ENCODE measurements at regions of chr16 and their contacts with region 1.

Region 1: GRCh38 chr16:87062569-87063442 is 254.4 kb downstream of the C16orf95 start:
- DNase-seq: peak; percentile 82
- ATAC-seq: peak; percentile 81
- H3K4me3 Mint-ChIP-seq: peak overlapping the region; percentile 20
- H3K27ac Mint-ChIP-seq: no peak overlapping the region
- H3K4me1 Mint-ChIP-seq: peaks cover 31% of the 10 kb centered on the region
- H3K27me3 Mint-ChIP-seq: no peaks in the 10 kb centered on the region
- CTCF ChIP-seq: peak; percentile 76

Region 2: GRCh38 chr16:86563489-86564345 is 499.1 kb before region 1 on chr16:
- CTCF ChIA-PET with region 1: interaction called, 10 read pairs
- POLR2A ChIA-PET with region 1: no interaction called
- DNase-seq: peak; percentile 93
- ATAC-seq: peak; percentile 27
- H3K4me3 Mint-ChIP-seq: peak overlapping the region; percentile 62
- H3K27ac Mint-ChIP-seq: no peak overlapping the region
- H3K4me1 Mint-ChIP-seq: peaks cover 20% of the 10 kb centered on the region
- H3K27me3 Mint-ChIP-seq: peaks cover 66% of the 10 kb centered on the region
- CTCF ChIP-seq: peak; percentile 98

Region 3: DNA sequence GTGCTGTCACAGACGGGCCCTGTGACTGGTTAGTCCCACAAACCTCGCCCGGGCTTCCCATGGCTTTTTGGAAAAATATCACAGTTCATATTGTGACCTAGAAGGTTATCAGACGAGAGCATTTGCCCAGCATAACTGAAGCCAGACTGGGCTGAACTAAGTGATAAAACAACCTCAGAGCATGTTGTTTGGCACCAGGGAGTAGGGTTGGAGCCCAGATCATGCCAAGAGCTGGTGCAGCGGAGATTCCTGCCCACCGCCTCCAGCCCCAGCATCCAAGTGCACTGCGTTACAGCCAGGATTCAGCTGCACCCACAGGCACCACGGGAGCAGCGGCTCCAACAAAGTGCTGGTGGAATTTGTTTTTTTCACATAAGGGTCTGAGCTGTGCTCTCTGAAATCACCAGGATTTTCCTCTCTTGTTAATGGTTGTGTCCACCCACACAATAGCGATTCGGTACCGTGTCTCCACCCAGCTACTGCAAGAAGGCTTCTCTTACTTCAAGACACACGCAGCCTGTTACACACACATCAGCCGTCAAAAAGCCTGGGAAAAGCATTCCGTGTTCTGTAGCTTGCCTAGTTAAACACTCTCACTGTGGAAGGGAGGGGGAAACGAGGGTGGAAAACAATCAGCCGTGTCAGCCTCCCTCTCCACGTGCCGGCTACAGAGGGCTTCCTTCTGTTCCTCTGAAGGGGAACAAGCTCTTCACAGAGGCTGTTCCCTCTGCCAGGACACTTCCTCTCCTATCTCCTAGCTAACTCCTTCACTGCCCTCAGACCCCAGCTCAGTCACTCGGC is 19.4 kb before region 1 on chr16:
- CTCF ChIA-PET with region 1: interaction called, 18 read pairs
- POLR2A ChIA-PET with region 1: no interaction called
- DNase-seq: no peak
- ATAC-seq: no peak
- H3K4me3 Mint-ChIP-seq: no peak overlapping the region
- H3K27ac Mint-ChIP-seq: peak overlapping the region; percentile 44
- H3K4me1 Mint-ChIP-seq: peaks cover 23% of the 10 kb centered on the region
- H3K27me3 Mint-ChIP-seq: no peaks in the 10 kb centered on the region
- CTCF ChIP-seq: no peak

Region 4: DNA sequence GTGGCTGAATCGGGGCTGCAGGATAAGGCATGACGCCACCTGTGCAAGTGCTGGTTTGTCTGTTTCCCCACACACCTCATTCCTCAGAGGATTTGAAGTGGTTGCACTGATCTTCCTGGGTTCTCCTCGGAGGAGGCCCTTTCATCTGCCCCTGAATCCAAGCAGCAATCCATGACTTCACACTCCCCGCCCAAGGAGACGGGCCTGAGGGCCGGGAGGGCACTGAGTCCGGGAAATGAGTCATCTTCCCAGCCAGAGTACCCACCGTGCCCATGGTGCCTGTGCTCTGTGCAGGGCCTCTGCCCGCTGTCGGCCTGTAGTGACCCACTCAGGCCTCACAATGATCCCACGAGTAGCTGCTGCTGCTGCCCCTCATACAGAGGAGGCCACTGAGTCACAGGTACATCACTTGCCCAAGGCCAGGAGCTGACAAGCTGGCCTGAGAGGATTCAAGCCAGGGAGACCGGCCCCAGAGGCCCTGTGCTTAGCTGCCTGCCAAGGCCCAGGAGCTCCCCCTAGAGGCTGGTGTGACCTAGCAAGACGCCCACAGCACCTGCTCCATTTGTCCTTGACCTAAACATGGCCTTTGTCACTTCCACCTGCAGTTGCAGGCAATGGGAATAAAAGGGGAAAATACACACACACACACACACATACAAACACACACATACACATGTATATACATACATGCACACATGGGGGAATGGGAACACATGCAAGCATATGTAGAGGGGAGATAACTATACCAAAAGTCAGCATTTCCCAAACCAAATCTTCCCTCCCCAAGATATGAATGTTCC is 14.3 kb after region 1 on chr16:
- CTCF ChIA-PET with region 1: interaction called, 25 read pairs
- POLR2A ChIA-PET with region 1: no interaction called
- DNase-seq: peak; percentile 90
- ATAC-seq: peak; percentile 96
- H3K4me3 Mint-ChIP-seq: no peak overlapping the region
- H3K27ac Mint-ChIP-seq: no peak overlapping the region
- H3K4me1 Mint-ChIP-seq: no peaks in the 10 kb centered on the region
- H3K27me3 Mint-ChIP-seq: peaks cover 4% of the 10 kb centered on the region
- CTCF ChIP-seq: peak; percentile 69

Region 5: GRCh38 chr16:87311387-87311786 is 248.6 kb after region 1 on chr16:
- CTCF ChIA-PET with region 1: no interaction called
- POLR2A ChIA-PET with region 1: no interaction called
- DNase-seq: no peak
- ATAC-seq: no peak
- H3K4me3 Mint-ChIP-seq: no peak overlapping the region
- H3K27ac Mint-ChIP-seq: no peak overlapping the region
- H3K4me1 Mint-ChIP-seq: peaks cover 3% of the 10 kb centered on the region; the same call in 1 of the 2 replicates
- H3K27me3 Mint-ChIP-seq: peaks cover 5% of the 10 kb centered on the region
- CTCF ChIP-seq: no peak